ENCODE measurements at regions of chr4 and their contacts with region 1.

Region 1: DNA sequence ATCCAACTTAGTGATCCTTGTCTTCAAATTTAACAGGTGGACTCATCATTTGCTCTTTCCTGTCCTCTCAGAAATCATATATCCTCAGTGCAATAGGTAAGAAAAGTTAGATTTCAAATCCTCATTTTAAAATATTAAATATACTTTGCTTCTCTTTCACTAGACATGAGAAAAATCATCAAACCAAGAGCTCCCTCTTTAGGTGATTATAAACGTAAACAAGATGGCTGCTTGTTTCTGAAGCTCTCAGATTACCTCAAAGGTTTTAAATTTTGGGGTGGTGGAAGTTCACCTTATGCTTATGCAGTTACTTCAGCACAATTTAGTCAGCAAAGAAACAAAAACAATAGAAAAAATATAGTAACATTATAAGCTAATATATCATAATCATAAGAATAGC is 27.3 kb downstream of the CSN3 start:
- DNase-seq: peak; percentile 10
- H3K4me3 ChIP-seq: no peak overlapping the region
- H3K27ac ChIP-seq: no peak overlapping the region
- H3K4me1 ChIP-seq: no peaks in the 10 kb centered on the region
- H3K27me3 ChIP-seq: no peaks in the 10 kb centered on the region
- CTCF ChIP-seq: peak in 1 of 2 donors; percentile 7
- POLR2A ChIP-seq: no peak

Region 2: DNA sequence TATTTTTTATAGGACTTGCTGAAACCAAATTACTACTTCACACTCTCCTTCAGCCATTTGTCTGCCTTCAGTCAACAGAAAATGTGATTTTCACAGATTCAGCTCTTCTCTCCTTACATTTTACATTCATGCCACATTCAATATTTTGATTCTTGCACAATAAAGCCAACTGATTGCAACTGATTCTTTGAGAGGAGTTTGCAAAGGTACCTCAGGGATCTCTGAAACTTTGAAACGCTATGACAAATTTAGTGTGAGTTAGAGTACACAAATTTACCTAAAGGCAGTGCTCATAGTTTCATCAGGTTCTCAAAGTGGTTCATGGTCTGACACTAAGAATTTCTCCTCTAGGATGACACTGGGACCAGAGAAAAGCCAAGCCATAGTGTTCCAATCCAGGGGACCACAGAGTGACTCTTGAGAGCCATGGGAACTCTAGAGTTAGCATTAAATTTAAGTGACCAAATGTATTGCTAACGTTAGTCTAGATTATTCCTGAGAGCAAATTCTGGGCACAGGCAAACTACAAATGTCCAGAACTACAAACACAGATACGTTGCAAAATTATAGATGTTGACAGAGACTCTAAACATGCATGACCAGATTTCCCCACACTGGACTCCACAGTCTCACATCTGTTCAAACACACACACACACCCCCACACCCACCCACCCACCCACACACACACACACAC is 18.3 kb before region 1 on chr4:
- CTCF ChIA-PET with region 1: interaction called, 15 read pairs
- POLR2A ChIA-PET with region 1: no interaction called
- dilution Hi-C with region 1: no loop called
- intact Hi-C with region 1: no loop called
- DNase-seq: no peak
- H3K4me3 ChIP-seq: no peak overlapping the region
- H3K27ac ChIP-seq: no peak overlapping the region
- H3K4me1 ChIP-seq: no peaks in the 10 kb centered on the region
- H3K27me3 ChIP-seq: no peaks in the 10 kb centered on the region
- CTCF ChIP-seq: no peak
- POLR2A ChIP-seq: no peak

Measured in endothelial cell of umbilical vein (primary cell).